PC-3 (cell line): ENCODE measurements at regions of chr6 and their contacts with region 1.

Region 1: DNA sequence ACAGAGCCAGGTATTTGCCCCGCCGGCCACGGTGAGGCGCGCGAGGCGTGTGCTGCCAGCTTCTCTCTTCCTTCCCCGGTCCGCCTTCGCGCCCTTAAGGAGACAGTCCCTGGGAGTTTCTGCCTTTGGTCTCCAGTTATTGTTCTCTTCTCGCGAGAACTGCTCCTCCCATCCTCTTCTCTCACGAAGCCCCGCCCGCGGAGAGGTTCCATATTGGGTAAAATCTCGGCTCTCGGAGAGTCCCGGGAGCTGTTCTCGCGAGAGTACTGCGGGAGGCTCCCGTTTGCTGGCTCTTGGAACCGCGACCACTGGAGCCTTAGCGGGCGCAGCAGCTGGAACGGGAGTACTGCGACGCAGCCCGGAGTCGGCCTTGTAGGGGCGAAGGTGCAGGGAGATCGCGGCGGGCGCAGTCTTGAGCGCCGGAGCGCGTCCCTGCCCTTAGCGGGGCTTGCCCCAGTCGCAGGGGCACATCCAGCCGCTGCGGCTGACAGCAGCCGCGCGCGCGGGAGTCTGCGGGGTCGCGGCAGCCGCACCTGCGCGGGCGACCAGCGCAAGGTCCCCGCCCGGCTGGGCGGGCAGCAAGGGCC is at the start of gene MAPK14:
- DNase-seq: peak; percentile 100
- ATAC-seq: peak; percentile 88
- H3K4me3 ChIP-seq: peak within 1 kb of the TSS; percentile 75
- H3K27ac ChIP-seq: peak within 1 kb of the TSS; percentile 52
- H3K4me1 ChIP-seq: peaks cover 15% of the 10 kb centered on the region; the same call in 1 of the 2 replicates
- H3K27me3 ChIP-seq: no peaks in the 10 kb centered on the region
- CTCF ChIP-seq: peak; percentile 85
- total RNA-seq, gene MAPK14: 53.7 and 56.8 TPM in 2 replicates

Region 2: DNA sequence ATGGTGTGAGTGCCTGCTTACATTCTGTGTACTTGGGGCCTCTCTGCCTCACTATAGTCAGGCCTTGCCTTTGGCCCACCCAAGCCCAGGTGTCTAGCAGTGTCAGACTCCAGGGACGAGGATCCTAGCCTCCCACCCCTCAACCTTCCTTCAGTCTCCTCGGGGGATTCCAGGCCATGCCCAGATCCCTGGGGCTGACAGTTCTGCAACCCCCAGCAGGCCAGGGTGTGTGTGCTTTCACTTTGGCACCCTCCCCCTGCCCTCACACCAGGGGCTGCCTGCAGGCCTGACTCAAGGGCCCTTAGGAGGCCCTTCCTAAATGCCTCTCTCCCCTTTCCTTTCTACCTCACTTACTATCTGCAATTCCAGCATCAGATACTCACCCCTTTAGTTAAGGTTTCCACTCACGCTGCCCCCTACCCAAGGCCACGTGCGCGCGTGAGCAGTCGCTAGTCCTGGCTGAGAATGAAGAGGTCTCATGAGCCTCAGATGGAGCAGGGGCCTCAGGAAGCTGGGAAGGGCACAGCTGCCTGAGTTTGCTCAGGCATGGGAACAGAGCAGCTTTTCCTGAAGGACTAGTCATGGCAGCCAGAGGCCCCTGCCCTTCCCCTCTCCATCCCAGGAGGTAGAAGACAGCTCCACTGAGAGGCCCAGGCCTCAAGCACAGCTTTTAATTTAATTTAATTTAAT is 229.6 kb before region 1 on chr6:
- CTCF ChIA-PET with region 1: interaction called, 10 read pairs
- POLR2A ChIA-PET with region 1: no interaction called
- intact Hi-C with region 1: no loop called
- DNase-seq: no peak
- ATAC-seq: no peak
- H3K4me3 ChIP-seq: no peak overlapping the region
- H3K27ac ChIP-seq: no peak overlapping the region
- H3K4me1 ChIP-seq: no peaks in the 10 kb centered on the region
- H3K27me3 ChIP-seq: no peaks in the 10 kb centered on the region
- CTCF ChIP-seq: no peak

Region 3: GRCh38 chr6:35920793-35921732 is 106.5 kb before region 1 on chr6 and contains the start of gene SRPK1:
- CTCF ChIA-PET with region 1: no interaction called
- POLR2A ChIA-PET with region 1: interaction called, 3 read pairs
- intact Hi-C with region 1: loop called (anchors 2 kb)
- DNase-seq: peak; percentile 89
- ATAC-seq: peak; percentile 77
- H3K4me3 ChIP-seq: peak within 1 kb of the TSS; percentile 99
- H3K27ac ChIP-seq: peak within 1 kb of the TSS; percentile 82
- H3K4me1 ChIP-seq: peaks cover 28% of the 10 kb centered on the region
- H3K27me3 ChIP-seq: no peaks in the 10 kb centered on the region
- CTCF ChIP-seq: no peak
- total RNA-seq, gene SRPK1: 95.2 and 100 TPM in 2 replicates

Region 4: GRCh38 chr6:36094753-36095496 is 67.3 kb after region 1 on chr6:
- CTCF ChIA-PET with region 1: interaction called, 10 read pairs
- POLR2A ChIA-PET with region 1: interaction called, 5 read pairs
- intact Hi-C with region 1: loop called (anchors 1 kb)
- DNase-seq: peak; percentile 88
- ATAC-seq: peak; percentile 97
- H3K4me3 ChIP-seq: no peak overlapping the region
- H3K27ac ChIP-seq: peak overlapping the region; percentile 9
- H3K4me1 ChIP-seq: peaks cover 8% of the 10 kb centered on the region
- H3K27me3 ChIP-seq: no peaks in the 10 kb centered on the region
- CTCF ChIP-seq: peak; percentile 99

Region 5: GRCh38 chr6:36123257-36124139 is 95.9 kb after region 1 on chr6:
- CTCF ChIA-PET with region 1: no interaction called
- POLR2A ChIA-PET with region 1: interaction called, 11 read pairs
- intact Hi-C with region 1: no loop called
- DNase-seq: peak; percentile 91
- ATAC-seq: peak; percentile 54
- H3K4me3 ChIP-seq: no peak overlapping the region
- H3K27ac ChIP-seq: no peak overlapping the region
- H3K4me1 ChIP-seq: peaks cover 37% of the 10 kb centered on the region
- H3K27me3 ChIP-seq: no peaks in the 10 kb centered on the region
- CTCF ChIP-seq: peak; percentile 68

Region 6: GRCh38 chr6:36139429-36139828 is 111.8 kb after region 1 on chr6:
- CTCF ChIA-PET with region 1: no interaction called
- POLR2A ChIA-PET with region 1: no interaction called
- intact Hi-C with region 1: no loop called
- DNase-seq: no peak
- ATAC-seq: no peak
- H3K4me3 ChIP-seq: no peak overlapping the region
- H3K27ac ChIP-seq: no peak overlapping the region
- H3K4me1 ChIP-seq: no peaks in the 10 kb centered on the region
- H3K27me3 ChIP-seq: no peaks in the 10 kb centered on the region
- CTCF ChIP-seq: peak; percentile 41

Region 7: DNA sequence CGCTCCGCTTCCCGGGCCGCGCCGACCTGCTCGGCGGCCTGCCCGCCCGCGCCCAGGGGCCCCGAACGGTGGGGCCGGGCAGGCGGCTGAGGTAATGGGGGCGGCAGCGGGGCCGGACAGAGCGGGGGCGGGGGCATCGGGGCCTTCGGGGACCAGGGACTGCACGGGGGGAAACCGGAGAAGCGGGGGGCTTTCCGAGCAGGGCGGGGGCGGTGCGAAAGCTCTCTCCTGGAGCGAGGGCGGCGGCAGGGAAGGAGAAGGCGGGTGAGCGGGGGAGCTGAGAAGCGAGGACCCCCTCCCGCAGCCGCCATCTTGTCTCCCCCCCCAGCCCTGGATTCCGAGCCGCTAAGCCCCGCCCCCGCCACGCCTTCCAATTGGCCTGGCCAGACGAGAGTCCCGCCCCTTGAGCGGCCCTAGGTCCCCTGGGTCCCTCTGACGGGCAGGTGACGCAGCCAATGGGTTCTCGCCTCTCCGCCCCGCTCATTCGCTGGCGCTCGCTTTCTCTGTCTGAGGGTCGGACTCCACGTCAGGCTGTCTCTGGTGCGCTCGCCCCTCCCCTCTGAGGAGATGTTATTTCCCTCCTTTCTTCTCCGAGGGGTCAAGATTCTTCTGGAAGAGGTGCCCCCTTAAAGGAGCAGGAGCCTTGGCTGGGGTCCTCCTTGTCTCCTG is 169.4 kb after region 1 on chr6:
- CTCF ChIA-PET with region 1: no interaction called
- POLR2A ChIA-PET with region 1: no interaction called
- intact Hi-C with region 1: loop called (anchors 1 kb)
- DNase-seq: peak; percentile 98
- ATAC-seq: peak; percentile 93
- H3K4me3 ChIP-seq: peak overlapping the region; percentile 94
- H3K27ac ChIP-seq: no peak overlapping the region
- H3K4me1 ChIP-seq: peaks cover 7% of the 10 kb centered on the region; the same call in 1 of the 2 replicates
- H3K27me3 ChIP-seq: no peaks in the 10 kb centered on the region
- CTCF ChIP-seq: no peak

Region 8: DNA sequence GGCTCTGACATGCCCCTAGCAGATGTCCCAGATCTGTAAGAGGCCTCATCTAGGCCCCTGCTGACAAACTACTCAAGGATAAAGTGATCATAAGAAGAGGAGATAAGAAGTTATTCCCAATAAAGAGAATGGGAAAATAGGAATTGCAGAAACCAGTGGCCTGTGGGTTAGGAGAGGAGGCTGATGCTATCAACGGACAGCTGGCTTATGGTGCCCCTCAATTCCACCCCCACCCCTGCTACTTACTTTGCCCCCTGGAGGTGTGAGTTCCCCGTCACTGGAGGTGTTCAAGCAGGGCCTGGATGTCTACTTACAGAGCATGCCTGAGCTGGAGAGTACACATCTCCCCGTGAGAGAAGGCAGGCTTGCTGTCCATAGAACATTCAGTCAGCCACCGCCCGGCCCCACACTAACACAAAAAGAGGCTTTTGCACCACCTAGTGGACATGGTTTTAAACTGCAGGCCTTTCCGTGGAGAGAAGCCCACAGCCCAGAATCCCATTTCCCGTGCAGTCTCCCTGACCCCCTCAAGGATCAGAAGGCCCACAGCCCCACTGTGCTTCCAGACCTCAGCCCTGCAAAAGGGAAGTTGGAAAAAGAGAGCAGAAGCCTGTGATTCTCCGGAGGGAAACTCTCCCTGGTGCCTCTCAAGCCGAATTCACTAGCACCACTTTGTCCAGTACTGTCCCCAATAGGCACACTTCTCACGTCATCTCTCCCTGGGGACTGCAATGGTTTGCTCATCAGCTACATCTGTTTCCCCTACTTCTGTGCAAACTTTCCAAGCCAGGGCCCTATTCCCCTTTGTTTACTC is 332.9 kb after region 1 on chr6:
- CTCF ChIA-PET with region 1: no interaction called
- POLR2A ChIA-PET with region 1: no interaction called
- intact Hi-C with region 1: loop called (anchors 1 kb)
- DNase-seq: peak; percentile 88
- ATAC-seq: peak; percentile 97
- H3K4me3 ChIP-seq: no peak overlapping the region
- H3K27ac ChIP-seq: no peak overlapping the region
- H3K4me1 ChIP-seq: no peaks in the 10 kb centered on the region
- H3K27me3 ChIP-seq: no peaks in the 10 kb centered on the region
- CTCF ChIP-seq: peak; percentile 88